Caco-2 (cell line): ENCODE measurements at regions of chr12 and their contacts with region 1.

Region 1: GRCh38 chr12:32671930-32672780 is 6.9 kb upstream of the DNM1L start:
- DNase-seq: peak; percentile 57 to 74
- H3K4me3 ChIP-seq: no peak overlapping the region
- H3K4me3 Mint-ChIP-seq: no peak overlapping the region
- H3K27ac Mint-ChIP-seq: no peak overlapping the region
- H3K4me1 ChIP-seq: no peaks in the 10 kb centered on the region; the same call in 1 of the 2 replicates
- H3K4me1 Mint-ChIP-seq: no peaks in the 10 kb centered on the region
- H3K27me3 ChIP-seq: no peaks in the 10 kb centered on the region
- H3K27me3 Mint-ChIP-seq: no peaks in the 10 kb centered on the region
- CTCF ChIP-seq: peak; percentile 73 to 80

Region 2: DNA sequence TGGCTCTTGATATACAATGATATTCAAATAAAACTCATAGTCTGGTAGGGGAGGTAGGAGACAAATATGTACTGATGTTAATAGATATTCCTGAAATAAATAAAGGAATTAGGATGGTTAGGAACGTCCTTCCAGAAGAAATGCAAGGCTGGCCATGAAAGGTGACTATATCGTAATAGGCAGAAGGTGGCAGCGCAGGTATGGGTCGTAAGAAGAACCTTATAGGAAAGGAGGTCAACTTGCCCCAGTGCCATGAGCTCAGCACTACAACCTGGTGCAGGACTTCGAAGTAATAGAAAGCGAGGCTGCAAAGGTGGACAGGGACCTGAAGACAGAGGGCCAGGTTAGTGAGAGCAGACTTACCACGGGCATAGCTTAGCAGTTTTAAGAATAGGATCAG is 328.1 kb before region 1 on chr12:
- CTCF ChIA-PET with region 1: interaction called, 12 read pairs
- POLR2A ChIA-PET with region 1: no interaction called
- intact Hi-C with region 1: loop called (anchors 1 kb)
- DNase-seq: peak; percentile 54
- H3K4me3 ChIP-seq: no peak overlapping the region
- H3K4me3 Mint-ChIP-seq: no peak overlapping the region
- H3K27ac Mint-ChIP-seq: no peak overlapping the region
- H3K4me1 ChIP-seq: no peaks in the 10 kb centered on the region
- H3K4me1 Mint-ChIP-seq: no peaks in the 10 kb centered on the region
- H3K27me3 ChIP-seq: no peaks in the 10 kb centered on the region
- H3K27me3 Mint-ChIP-seq: no peaks in the 10 kb centered on the region
- CTCF ChIP-seq: peak in 1 of 2 experiments; percentile 40

Region 3: DNA sequence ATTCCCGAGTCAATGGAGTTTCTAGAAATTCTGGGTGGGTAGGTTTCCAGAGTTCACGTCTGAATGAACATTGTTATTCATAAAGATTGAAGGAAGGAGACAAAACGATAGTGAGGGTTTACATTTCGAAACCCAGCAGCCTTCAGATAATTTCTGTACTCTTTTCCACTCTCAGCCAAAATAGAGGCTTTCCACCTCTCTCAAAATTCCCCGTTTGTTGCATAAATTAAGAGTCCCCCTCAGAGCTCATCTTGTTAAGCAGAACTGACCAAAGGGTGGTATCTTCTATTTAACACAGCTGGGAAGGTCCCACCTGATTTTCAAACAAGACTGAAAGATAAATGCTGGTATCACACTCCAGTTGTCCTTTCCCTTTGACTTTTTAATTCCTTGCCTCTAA is 105.0 kb after region 1 on chr12:
- CTCF ChIA-PET with region 1: no interaction called
- POLR2A ChIA-PET with region 1: no interaction called
- intact Hi-C with region 1: no loop called
- DNase-seq: no peak
- H3K4me3 ChIP-seq: no peak overlapping the region
- H3K4me3 Mint-ChIP-seq: no peak overlapping the region
- H3K27ac Mint-ChIP-seq: no peak overlapping the region
- H3K4me1 ChIP-seq: 0 out of 2 replicates have a peak, but pooled peaks cover 6% of the 10 kb centered on the region
- H3K4me1 Mint-ChIP-seq: peaks cover 12% of the 10 kb centered on the region
- H3K27me3 ChIP-seq: no peaks in the 10 kb centered on the region
- H3K27me3 Mint-ChIP-seq: no peaks in the 10 kb centered on the region
- CTCF ChIP-seq: no peak

Region 4: GRCh38 chr12:33116284-33116683 is 444.1 kb after region 1 on chr12:
- CTCF ChIA-PET with region 1: no interaction called
- POLR2A ChIA-PET with region 1: no interaction called
- intact Hi-C with region 1: no loop called
- DNase-seq: no peak
- H3K4me3 ChIP-seq: no peak overlapping the region
- H3K4me3 Mint-ChIP-seq: no peak overlapping the region
- H3K27ac Mint-ChIP-seq: no peak overlapping the region
- H3K4me1 ChIP-seq: no peaks in the 10 kb centered on the region
- H3K4me1 Mint-ChIP-seq: peaks cover 8% of the 10 kb centered on the region
- H3K27me3 ChIP-seq: no peaks in the 10 kb centered on the region
- H3K27me3 Mint-ChIP-seq: no peaks in the 10 kb centered on the region
- CTCF ChIP-seq: no peak